ENCODE measurements at regions of chr11 and their contacts with region 1.

Region 1: DNA sequence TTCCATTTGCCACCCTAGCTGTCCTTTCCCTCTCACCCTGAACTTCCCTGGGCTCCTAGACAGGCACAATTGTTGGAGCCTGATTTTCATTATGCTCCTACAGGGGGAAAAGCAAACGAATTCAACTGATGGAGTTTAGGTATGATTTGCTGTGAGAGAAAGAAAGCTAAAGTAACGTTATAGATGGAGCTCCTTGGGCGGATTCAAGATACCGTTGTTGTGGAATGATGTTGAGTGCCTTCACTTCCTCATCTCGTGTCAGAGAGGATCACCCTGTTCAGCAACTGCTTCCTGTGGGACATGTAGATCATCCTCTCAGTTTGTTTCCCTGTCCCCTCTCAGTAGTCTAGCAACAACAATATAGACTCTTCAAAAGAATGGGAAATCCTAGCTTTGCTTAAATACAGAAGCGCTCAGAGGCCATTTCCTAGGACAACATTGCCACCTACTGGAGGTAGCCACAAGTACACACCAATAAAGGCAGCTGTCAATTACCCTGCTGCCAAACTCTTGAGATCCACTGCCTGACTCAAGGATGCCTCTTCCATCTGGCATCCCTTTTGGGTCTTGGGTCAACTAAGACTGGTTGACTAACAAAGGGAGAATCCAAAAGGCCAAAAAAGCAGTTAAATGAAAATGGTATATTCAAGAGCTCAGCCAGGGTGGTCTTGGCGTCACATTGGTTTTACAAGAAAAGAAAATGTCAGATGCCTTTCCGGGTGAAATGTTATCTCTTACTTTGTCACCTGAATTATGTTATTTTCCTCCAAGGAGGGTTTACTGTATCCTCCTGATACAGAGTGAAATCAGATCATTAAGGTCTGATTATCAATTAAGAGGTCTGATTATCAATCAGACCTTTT is 13.5 kb upstream of the DTX4 start:
- DNase-seq: peak; percentile 78
- H3K4me3 Mint-ChIP-seq: no peak overlapping the region
- H3K27ac Mint-ChIP-seq: no peak overlapping the region
- H3K4me1 Mint-ChIP-seq: no peaks in the 10 kb centered on the region
- H3K27me3 Mint-ChIP-seq: peaks cover 17% of the 10 kb centered on the region
- CTCF ChIP-seq: peak; percentile 76

Region 2: GRCh38 chr11:59053387-59053786 is 105.0 kb before region 1 on chr11:
- CTCF ChIA-PET with region 1: interaction called, 14 read pairs
- POLR2A ChIA-PET with region 1: interaction called, 3 read pairs
- intact Hi-C with region 1: loop called (anchors 1 kb)
- DNase-seq: peak; percentile 69
- H3K4me3 Mint-ChIP-seq: no peak overlapping the region
- H3K27ac Mint-ChIP-seq: no peak overlapping the region
- H3K4me1 Mint-ChIP-seq: peaks cover 7% of the 10 kb centered on the region
- H3K27me3 Mint-ChIP-seq: peaks cover 64% of the 10 kb centered on the region
- CTCF ChIP-seq: peak; percentile 71

Region 3: DNA sequence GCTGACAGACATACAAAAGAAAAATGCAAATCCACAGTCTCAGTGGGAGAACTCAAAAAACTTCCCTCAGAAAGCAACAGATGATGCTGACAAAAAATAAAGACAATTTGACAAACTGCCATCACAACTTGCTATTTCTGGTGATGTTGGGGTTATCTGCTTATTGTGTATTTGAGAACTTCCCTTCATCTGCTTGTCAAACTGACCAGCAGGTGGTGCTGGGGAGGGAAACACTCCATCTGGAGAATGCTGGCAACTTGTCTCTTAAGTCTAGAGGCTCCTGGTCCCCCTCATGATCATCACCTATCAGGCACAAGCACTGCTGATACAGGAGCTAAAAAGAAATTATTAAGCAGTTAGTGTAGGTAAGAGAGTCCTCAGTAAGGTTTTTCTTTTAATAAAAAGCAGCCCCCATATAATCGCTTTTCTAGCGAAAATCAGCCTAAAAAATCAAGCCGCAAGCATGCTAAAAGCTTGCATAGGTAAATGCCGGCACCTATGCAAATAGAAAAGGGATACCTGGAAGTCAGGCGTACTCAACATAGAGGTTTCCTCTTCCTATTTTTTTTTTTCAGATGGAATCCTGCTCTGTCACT is 61.2 kb before region 1 on chr11:
- CTCF ChIA-PET with region 1: interaction called, 32 read pairs
- POLR2A ChIA-PET with region 1: no interaction called
- intact Hi-C with region 1: loop called (anchors 1 kb)
- DNase-seq: peak; percentile 72
- H3K4me3 Mint-ChIP-seq: no peak overlapping the region
- H3K27ac Mint-ChIP-seq: no peak overlapping the region
- H3K4me1 Mint-ChIP-seq: no peaks in the 10 kb centered on the region
- H3K27me3 Mint-ChIP-seq: peaks cover 32% of the 10 kb centered on the region
- CTCF ChIP-seq: peak; percentile 71

Region 4: GRCh38 chr11:59106363-59107336 is 51.8 kb before region 1 on chr11 and contains the start of gene FAM111B:
- CTCF ChIA-PET with region 1: interaction called, 12 read pairs
- POLR2A ChIA-PET with region 1: no interaction called
- intact Hi-C with region 1: no loop called
- DNase-seq: peak; percentile 96
- H3K4me3 Mint-ChIP-seq: peak within 1 kb of the TSS; percentile 90
- H3K27ac Mint-ChIP-seq: peak within 1 kb of the TSS; percentile 47
- H3K4me1 Mint-ChIP-seq: peaks cover 26% of the 10 kb centered on the region
- H3K27me3 Mint-ChIP-seq: no peaks in the 10 kb centered on the region
- CTCF ChIP-seq: no peak
- total RNA-seq, gene FAM111B: 0.74 and 1.6 TPM in 2 replicates

Region 5: DNA sequence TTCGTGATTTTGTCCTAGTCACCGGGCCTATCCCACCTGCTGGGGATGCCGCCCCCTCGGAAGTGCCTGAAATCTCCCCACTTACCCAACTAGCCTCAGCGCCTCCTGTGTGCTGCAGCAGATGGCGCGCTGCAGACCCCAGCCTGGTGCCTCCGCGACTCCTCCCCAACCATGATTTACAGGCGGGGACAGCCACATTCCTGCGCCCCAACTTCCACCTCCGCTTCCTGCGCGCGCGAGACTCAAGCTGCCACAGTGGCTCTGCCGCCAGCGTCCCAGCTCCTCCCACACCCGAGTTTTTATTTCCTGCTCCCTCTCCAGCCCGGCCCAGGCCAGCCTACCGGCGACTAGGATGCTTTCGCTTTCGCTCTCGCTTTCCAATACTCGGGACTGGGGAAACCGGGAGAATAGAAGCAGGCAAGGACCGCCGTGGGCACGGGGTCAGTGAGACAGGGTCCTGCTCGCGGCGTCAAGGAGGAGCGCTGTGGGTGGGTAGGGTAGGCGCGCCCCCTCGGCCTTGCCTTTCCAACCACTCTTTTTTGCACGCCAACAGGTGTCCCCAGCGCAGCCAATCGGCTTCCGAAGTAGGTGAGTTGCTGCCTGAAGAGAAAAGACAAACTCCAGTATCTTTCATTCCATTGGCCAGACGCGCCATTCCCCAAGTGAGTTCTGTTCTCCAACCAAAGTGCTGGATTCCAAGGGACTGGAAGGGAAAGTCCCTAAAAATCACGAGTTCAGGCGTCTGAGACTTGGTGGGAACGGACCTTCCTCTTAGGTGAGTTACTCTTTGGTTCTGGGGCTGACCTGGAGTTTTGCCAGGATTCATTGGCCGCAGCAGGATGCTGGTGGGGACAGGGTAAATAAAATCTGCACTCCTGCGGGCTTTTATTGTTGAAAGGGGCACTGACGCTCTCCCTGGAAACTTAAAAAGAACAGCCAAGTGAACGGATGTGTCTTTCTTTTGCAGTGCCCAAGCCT is 15.6 kb before region 1 on chr11 and contains the start of gene FAM111A:
- CTCF ChIA-PET with region 1: interaction called, 146 read pairs
- POLR2A ChIA-PET with region 1: interaction called, 21 read pairs
- intact Hi-C with region 1: loop called (anchors 1 kb)
- DNase-seq: peak; percentile 95
- H3K4me3 Mint-ChIP-seq: peak within 1 kb of the TSS; percentile 97
- H3K27ac Mint-ChIP-seq: peak within 1 kb of the TSS; percentile 98
- H3K4me1 Mint-ChIP-seq: peaks cover 50% of the 10 kb centered on the region
- H3K27me3 Mint-ChIP-seq: no peaks in the 10 kb centered on the region
- CTCF ChIP-seq: peak; percentile 6
- total RNA-seq, gene FAM111A: 26.3 and 27.7 TPM in 2 replicates

Region 6: GRCh38 chr11:59197991-59198390 is 39.6 kb after region 1 on chr11:
- CTCF ChIA-PET with region 1: interaction called, 19 read pairs
- POLR2A ChIA-PET with region 1: no interaction called
- intact Hi-C with region 1: no loop called
- DNase-seq: no peak
- H3K4me3 Mint-ChIP-seq: no peak overlapping the region
- H3K27ac Mint-ChIP-seq: peak overlapping the region; percentile 17
- H3K4me1 Mint-ChIP-seq: peaks cover 14% of the 10 kb centered on the region
- H3K27me3 Mint-ChIP-seq: no peaks in the 10 kb centered on the region
- CTCF ChIP-seq: no peak

Measured in MCF 10A (cell line).